Natural killer cell (primary cell): ENCODE measurements at regions of chr20 and their contacts with region 1.

Region 1: GRCh38 chr20:23420943-23421931 is at the start of gene NAPB:
- DNase-seq: peak; percentile 91 to 95
- ATAC-seq: peak; percentile 98 to 99 (median 99)
- H3K4me3 ChIP-seq: peak within 1 kb of the TSS; percentile 93
- H3K4me3 Mint-ChIP-seq: peak within 1 kb of the TSS; percentile 96
- H3K27ac ChIP-seq: peak within 1 kb of the TSS; percentile 71
- H3K27ac Mint-ChIP-seq: peak within 1 kb of the TSS; percentile 90 to 95
- H3K4me1 ChIP-seq: peaks cover 14% of the 10 kb centered on the region
- H3K4me1 Mint-ChIP-seq: peaks cover 37 to 43% of the 10 kb centered on the region in 2 donors
- H3K27me3 ChIP-seq: no peaks in the 10 kb centered on the region
- H3K27me3 Mint-ChIP-seq: peaks cover 0 to 10% of the 10 kb centered on the region in 2 donors
- CTCF ChIP-seq: peak; percentile 33
- total RNA-seq, gene NAPB: 22.8 to 23.9 (median 22.9) TPM

Region 2: DNA sequence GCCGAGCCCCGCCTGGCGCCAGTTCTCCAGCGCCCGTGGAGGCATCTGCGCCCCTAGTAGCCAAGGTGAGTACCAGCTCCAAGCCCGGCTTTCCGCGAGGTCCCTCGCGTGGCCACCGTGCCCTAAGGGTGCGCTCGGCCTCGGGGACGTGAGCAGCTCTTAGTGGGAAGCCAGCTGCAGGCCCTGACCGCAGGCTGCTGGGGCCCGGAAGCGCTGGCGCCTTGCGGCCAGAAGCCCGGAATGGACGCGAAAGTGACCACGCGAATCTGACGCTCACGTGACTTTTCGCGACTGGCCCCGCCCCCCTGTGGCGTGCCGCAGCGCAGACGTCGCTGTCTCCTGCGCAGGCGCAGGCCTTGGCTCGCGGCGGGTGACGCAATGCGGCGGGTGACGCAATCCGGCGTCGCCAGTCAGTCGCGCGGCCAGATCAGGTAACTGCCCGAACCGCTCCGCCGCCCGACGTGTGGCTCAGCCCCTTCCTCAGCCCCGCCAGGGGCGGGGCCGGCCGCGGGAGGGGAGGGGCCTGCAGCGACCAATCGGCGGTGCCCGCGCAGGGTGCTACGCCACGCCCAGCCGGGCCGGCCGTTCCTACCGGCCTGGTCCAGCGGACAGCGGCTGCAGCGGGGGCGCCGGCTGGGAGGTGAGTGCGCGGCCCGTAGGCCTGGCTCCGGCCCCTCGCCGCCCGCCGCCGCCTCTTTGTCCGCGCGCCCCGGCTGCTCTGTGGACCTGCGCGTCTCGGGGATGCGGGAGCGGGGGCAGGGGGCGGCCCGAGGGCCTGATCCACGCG is 59.4 kb before region 1 on chr20 and contains the start of gene GZF1:
- intact Hi-C with region 1: loop called (anchors 1 kb)
- DNase-seq: peak; percentile 99
- ATAC-seq: peak; percentile 75 to 91 (median 77)
- H3K4me3 ChIP-seq: peak within 1 kb of the TSS; percentile 90
- H3K4me3 Mint-ChIP-seq: peak within 1 kb of the TSS; percentile 98
- H3K27ac ChIP-seq: peak within 1 kb of the TSS; percentile 99
- H3K27ac Mint-ChIP-seq: peak within 1 kb of the TSS; percentile 98
- H3K4me1 ChIP-seq: peaks cover 45% of the 10 kb centered on the region
- H3K4me1 Mint-ChIP-seq: peaks cover 54 to 64% of the 10 kb centered on the region in 2 donors
- H3K27me3 ChIP-seq: no peaks in the 10 kb centered on the region
- H3K27me3 Mint-ChIP-seq: no peaks in the 10 kb centered on the region
- CTCF ChIP-seq: no peak
- total RNA-seq, gene GZF1: 45.1 to 56.6 (median 45.9) TPM

Region 3: GRCh38 chr20:23456409-23456808 is 35.2 kb after region 1 on chr20:
- intact Hi-C with region 1: loop called (anchors 1 kb)
- DNase-seq: peak; percentile 54 to 55
- ATAC-seq: peak; percentile 78 to 91 (median 86)
- H3K4me3 ChIP-seq: no peak overlapping the region
- H3K4me3 Mint-ChIP-seq: peak overlapping the region; percentile 88
- H3K27ac ChIP-seq: peak overlapping the region; percentile 93
- H3K27ac Mint-ChIP-seq: peak overlapping the region in 1 of 2 donors; percentile 97
- H3K4me1 ChIP-seq: peaks cover 36% of the 10 kb centered on the region
- H3K4me1 Mint-ChIP-seq: peaks cover 46 to 48% of the 10 kb centered on the region in 2 donors
- H3K27me3 ChIP-seq: no peaks in the 10 kb centered on the region
- H3K27me3 Mint-ChIP-seq: no peaks in the 10 kb centered on the region
- CTCF ChIP-seq: no peak

Region 4: GRCh38 chr20:23484081-23484480 is 62.8 kb after region 1 on chr20:
- intact Hi-C with region 1: no loop called
- DNase-seq: no peak
- ATAC-seq: no peak
- H3K4me3 ChIP-seq: no peak overlapping the region
- H3K4me3 Mint-ChIP-seq: no peak overlapping the region
- H3K27ac ChIP-seq: no peak overlapping the region
- H3K27ac Mint-ChIP-seq: no peak overlapping the region
- H3K4me1 ChIP-seq: no peaks in the 10 kb centered on the region
- H3K4me1 Mint-ChIP-seq: peaks cover 0 to 9% of the 10 kb centered on the region in 2 donors
- H3K27me3 ChIP-seq: no peaks in the 10 kb centered on the region
- H3K27me3 Mint-ChIP-seq: peaks cover 0 to 3% of the 10 kb centered on the region in 2 donors
- CTCF ChIP-seq: no peak